Prostate gland (tissue), 2 donors: ENCODE measurements at regions of chr6 and their contacts with region 1.

Region 1: GRCh38 chr6:108947114-108947854 is 99.1 kb downstream of the ARMC2 start:
- DNase-seq: peak; percentile 80
- H3K4me3 ChIP-seq: no peak overlapping the region
- H3K27ac ChIP-seq: peak overlapping the region; percentile 73 to 75
- H3K4me1 ChIP-seq: peaks cover 10% of the 10 kb centered on the region
- H3K27me3 ChIP-seq: no peaks in the 10 kb centered on the region
- CTCF ChIP-seq: no peak
- POLR2A ChIP-seq: no peak

Region 2: GRCh38 chr6:109009236-109009961 is 62.1 kb after region 1 on chr6:
- intact Hi-C with region 1: loop called (anchors 5 kb)
- DNase-seq: peak; percentile 94
- H3K4me3 ChIP-seq: peak overlapping the region; percentile 97 to 98
- H3K27ac ChIP-seq: peak overlapping the region; percentile 94 to 96
- H3K4me1 ChIP-seq: no peaks in the 10 kb centered on the region
- H3K27me3 ChIP-seq: no peaks in the 10 kb centered on the region
- CTCF ChIP-seq: peak; percentile 15 to 92 (median 48)
- POLR2A ChIP-seq: peak; percentile 90

Region 3: GRCh38 chr6:109531446-109531845 is 584.2 kb after region 1 on chr6:
- intact Hi-C with region 1: no loop called
- DNase-seq: no peak
- H3K4me3 ChIP-seq: no peak overlapping the region
- H3K27ac ChIP-seq: no peak overlapping the region
- H3K4me1 ChIP-seq: no peaks in the 10 kb centered on the region
- H3K27me3 ChIP-seq: no peaks in the 10 kb centered on the region
- CTCF ChIP-seq: no peak
- POLR2A ChIP-seq: no peak